A673 (cell line): ENCODE measurements at regions of chr9 and their contacts with region 1.

Region 1: DNA sequence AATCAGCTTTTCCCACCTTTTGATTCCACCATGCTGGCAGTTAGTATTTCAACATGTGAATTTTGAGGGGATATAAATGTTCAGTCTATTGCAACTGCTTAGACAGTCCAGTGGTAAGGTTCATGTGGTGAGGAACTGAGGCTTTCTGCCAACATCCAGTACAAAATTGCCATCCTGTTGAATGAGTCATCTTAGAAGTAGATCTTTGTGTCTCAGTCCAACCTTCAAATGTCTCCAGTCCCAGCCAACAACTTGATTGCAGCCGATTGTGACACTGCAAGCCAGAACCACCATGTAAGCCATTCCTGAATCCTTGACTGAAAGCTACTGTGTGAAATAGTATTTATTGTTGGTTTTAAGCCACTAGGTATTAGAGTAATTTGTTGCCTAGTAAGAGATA is 331.5 kb upstream of the GRIN3A start:
- DNase-seq: no peak
- H3K4me3 ChIP-seq: no peak overlapping the region
- H3K27ac ChIP-seq: no peak overlapping the region
- H3K4me1 ChIP-seq: no peaks in the 10 kb centered on the region
- H3K27me3 ChIP-seq: no peaks in the 10 kb centered on the region
- CTCF ChIP-seq: no peak

Region 2: DNA sequence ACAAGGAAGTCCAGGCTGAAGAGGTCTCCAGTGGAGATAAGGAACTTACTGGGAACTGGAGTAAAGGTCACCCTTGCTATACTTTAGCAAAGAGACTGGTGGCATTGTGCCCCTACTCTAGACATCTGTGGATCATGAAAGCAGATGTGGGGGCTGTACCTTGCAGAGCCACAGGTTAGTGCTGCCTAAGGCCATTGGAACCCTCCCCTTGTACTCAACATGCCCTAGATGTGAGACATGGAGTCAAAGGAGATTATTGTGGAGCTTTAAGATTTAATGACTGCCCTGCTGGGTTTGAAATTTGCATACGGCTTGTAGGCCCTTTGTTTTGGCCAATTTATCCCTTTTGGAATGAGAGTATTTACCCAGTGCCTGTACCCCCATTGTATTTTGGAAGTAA is 65.8 kb after region 1 on chr9:
- CTCF ChIA-PET with region 1: no interaction called
- POLR2A ChIA-PET with region 1: no interaction called
- intact Hi-C with region 1: loop called (anchors 10 kb)
- DNase-seq: no peak
- H3K4me3 ChIP-seq: no peak overlapping the region
- H3K27ac ChIP-seq: no peak overlapping the region
- H3K4me1 ChIP-seq: no peaks in the 10 kb centered on the region
- H3K27me3 ChIP-seq: no peaks in the 10 kb centered on the region
- CTCF ChIP-seq: no peak